ENCODE measurements at regions of chr2 and their contacts with region 1.

Region 1: DNA sequence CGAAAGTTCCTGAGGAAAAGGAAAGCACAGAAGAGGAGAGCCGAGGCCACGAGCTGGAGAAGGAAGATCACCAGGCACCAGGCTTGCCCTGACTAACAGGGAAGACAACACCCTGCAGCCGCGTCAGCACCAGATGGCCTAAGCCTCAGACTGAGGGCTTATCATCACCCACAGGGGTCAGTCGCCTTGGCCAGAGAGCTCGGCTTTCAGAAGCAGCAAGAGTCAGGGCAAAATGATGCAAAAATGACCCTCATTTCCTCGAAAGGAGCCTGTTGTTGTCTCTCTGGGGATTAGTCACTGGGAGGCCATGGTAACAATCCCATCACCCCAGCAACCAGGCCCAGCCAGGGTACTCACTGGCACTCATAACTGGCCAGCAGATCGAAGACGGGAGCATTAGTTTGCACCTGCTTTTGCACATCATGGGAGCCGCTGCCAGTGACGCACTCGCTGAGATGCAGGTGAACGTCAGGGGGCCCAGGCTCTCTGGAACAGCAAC is 42.7 kb upstream of the ZFP36L2 start:
- DNase-seq: peak; percentile 70 to 94 (median 91)
- ATAC-seq: peak; percentile 51 to 86 (median 84)
- H3K4me3 ChIP-seq: no peak overlapping the region
- H3K27ac ChIP-seq: peak overlapping the region; percentile 63 to 90 (median 78)
- H3K4me1 ChIP-seq: peaks cover 18 to 73% (median 54%) of the 10 kb centered on the region in 12 donors
- H3K27me3 ChIP-seq: no peaks in the 10 kb centered on the region
- CTCF ChIP-seq: peak in 3 of 12 donors; percentile 18 to 28 (median 19)
- POLR2A ChIP-seq: no peak

Region 2: GRCh38 chr2:43312755-43313641 is 43.9 kb after region 1 on chr2:
- intact Hi-C with region 1: no loop called
- DNase-seq: peak in 1 of 5 donors; percentile 11
- ATAC-seq: peak in 3 of 4 donors; percentile 50 to 57 (median 52)
- H3K4me3 ChIP-seq: no peak overlapping the region
- H3K27ac ChIP-seq: peak overlapping the region in 11 of 12 donors; percentile 19 to 74 (median 61)
- H3K4me1 ChIP-seq: peaks cover 4 to 38% (median 22%) of the 10 kb centered on the region in 12 donors
- H3K27me3 ChIP-seq: no peaks in the 10 kb centered on the region
- CTCF ChIP-seq: no peak
- POLR2A ChIP-seq: no peak

Region 3: GRCh38 chr2:43324259-43325106 is 55.4 kb after region 1 on chr2:
- intact Hi-C with region 1: loop called in 1 of 10 experiments (anchors 5 kb)
- DNase-seq: peak in 4 of 5 donors; percentile 55 to 86 (median 59)
- ATAC-seq: peak; percentile 73 to 86 (median 79)
- H3K4me3 ChIP-seq: no peak overlapping the region
- H3K27ac ChIP-seq: peak overlapping the region; percentile 55 to 88 (median 72)
- H3K4me1 ChIP-seq: peaks cover 0 to 51% (median 32%) of the 10 kb centered on the region in 12 donors
- H3K27me3 ChIP-seq: no peaks in the 10 kb centered on the region
- CTCF ChIP-seq: no peak
- POLR2A ChIP-seq: no peak

Region 4: GRCh38 chr2:43333656-43334144 is 64.6 kb after region 1 on chr2:
- intact Hi-C with region 1: loop called in 4 of 10 experiments (anchors 5 kb)
- DNase-seq: peak in 3 of 5 donors; percentile 56 to 70 (median 56)
- ATAC-seq: peak; percentile 36 to 69 (median 51)
- H3K4me3 ChIP-seq: peak overlapping the region in 7 of 12 donors; percentile 0 to 23 (median 9)
- H3K27ac ChIP-seq: peak overlapping the region; percentile 54 to 94 (median 85)
- H3K4me1 ChIP-seq: peaks cover 13 to 69% (median 59%) of the 10 kb centered on the region in 12 donors
- H3K27me3 ChIP-seq: no peaks in the 10 kb centered on the region
- CTCF ChIP-seq: no peak
- POLR2A ChIP-seq: peak in 1 of 2 donors; percentile 15